ENCODE measurements at regions of chr17 and their contacts with region 1.

Region 1: GRCh38 chr17:7851438-7852256 is 3.2 kb upstream of the TMEM88 start:
- DNase-seq: peak; percentile 97
- ATAC-seq: peak; percentile 91
- H3K4me3 Mint-ChIP-seq: peak overlapping the region; percentile 61
- H3K27ac Mint-ChIP-seq: peak overlapping the region; percentile 67
- H3K4me1 Mint-ChIP-seq: peaks cover 53% of the 10 kb centered on the region
- H3K27me3 Mint-ChIP-seq: no peaks in the 10 kb centered on the region

Region 2: DNA sequence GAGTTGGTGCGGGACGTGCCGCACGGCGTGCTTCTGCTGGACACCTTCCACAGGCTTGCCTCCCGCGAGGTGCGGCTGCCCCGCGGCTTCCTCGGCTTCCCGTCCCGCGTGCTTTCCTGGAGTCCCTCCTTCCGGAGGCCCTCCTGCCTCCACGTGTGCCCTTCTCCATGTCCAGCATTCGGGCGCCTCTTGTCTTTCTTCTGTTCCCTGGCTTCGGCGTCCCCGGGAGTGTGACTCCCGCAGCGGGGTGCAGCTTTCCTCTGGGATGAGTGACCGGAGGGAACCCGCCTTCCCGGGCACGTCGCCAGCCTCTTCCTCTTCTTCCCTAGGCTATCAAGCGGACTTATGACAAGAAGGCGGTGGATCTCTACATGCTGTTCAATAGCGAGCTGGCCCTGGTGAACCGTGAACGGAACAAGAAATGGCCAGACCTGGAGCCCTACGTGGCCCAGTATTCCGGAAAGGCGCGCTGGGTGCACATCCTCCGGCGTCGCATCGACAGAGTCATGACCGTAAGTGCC is 111.1 kb before region 1 on chr17:
- CTCF ChIA-PET with region 1: interaction called, 6 read pairs
- POLR2A ChIA-PET with region 1: no interaction called
- intact Hi-C with region 1: loop called (anchors 1 to 5 kb)
- DNase-seq: no peak
- ATAC-seq: no peak
- H3K4me3 Mint-ChIP-seq: no peak overlapping the region
- H3K27ac Mint-ChIP-seq: no peak overlapping the region
- H3K4me1 Mint-ChIP-seq: no peaks in the 10 kb centered on the region
- H3K27me3 Mint-ChIP-seq: peaks cover 10% of the 10 kb centered on the region

Region 3: DNA sequence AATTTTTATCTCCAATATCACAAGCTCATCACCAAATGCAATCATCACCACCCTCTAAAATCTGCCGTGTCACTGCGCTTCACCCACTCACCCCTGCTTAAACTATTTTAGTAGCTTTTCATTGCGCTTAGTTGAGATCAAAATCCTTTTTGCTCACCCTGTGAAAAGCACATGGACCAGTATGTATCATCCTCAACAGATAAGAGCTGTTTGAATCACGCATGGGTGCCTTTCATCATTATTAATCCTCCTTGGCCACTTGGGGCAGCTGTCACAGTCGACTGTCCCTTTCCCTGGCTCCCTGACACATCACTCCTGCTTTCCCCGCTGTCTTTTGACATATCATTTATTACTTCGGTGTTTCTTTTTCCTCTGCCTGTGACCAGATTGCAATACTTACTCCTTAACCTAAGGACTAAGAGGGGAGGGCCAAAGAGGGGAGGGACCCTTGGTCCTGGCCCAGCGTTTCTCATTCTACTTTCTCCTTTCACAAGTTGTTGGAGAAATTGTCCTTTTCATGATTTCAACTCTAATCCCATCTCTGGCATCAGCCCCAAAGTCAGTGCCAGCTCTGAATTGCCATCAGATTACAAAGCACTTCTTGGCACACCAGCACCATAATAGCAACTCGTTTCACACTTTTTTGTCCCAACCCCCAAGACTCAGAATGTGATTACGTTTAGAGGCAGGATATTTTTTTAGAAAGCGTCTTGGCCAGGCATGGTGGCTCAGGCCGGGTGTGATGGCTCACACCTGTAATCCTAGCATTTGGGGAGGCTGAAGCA is 26.2 kb before region 1 on chr17:
- CTCF ChIA-PET with region 1: interaction called, 13 read pairs
- POLR2A ChIA-PET with region 1: no interaction called
- intact Hi-C with region 1: loop called (anchors 1 kb)
- DNase-seq: no peak
- ATAC-seq: peak; percentile 72
- H3K4me3 Mint-ChIP-seq: no peak overlapping the region
- H3K27ac Mint-ChIP-seq: no peak overlapping the region
- H3K4me1 Mint-ChIP-seq: peaks cover 3% of the 10 kb centered on the region
- H3K27me3 Mint-ChIP-seq: no peaks in the 10 kb centered on the region